ENCODE measurements at regions of chr20 and their contacts with region 1.

Region 1: GRCh38 chr20:32031007-32031958 is 20.8 kb upstream of the HCK start:
- DNase-seq: peak; percentile 68
- ATAC-seq: peak; percentile 91
- H3K4me3 Mint-ChIP-seq: no peak overlapping the region
- H3K27ac Mint-ChIP-seq: no peak overlapping the region
- H3K4me1 Mint-ChIP-seq: no peaks in the 10 kb centered on the region
- H3K27me3 Mint-ChIP-seq: peaks cover 16% of the 10 kb centered on the region
- CTCF ChIP-seq: peak; percentile 100

Region 2: DNA sequence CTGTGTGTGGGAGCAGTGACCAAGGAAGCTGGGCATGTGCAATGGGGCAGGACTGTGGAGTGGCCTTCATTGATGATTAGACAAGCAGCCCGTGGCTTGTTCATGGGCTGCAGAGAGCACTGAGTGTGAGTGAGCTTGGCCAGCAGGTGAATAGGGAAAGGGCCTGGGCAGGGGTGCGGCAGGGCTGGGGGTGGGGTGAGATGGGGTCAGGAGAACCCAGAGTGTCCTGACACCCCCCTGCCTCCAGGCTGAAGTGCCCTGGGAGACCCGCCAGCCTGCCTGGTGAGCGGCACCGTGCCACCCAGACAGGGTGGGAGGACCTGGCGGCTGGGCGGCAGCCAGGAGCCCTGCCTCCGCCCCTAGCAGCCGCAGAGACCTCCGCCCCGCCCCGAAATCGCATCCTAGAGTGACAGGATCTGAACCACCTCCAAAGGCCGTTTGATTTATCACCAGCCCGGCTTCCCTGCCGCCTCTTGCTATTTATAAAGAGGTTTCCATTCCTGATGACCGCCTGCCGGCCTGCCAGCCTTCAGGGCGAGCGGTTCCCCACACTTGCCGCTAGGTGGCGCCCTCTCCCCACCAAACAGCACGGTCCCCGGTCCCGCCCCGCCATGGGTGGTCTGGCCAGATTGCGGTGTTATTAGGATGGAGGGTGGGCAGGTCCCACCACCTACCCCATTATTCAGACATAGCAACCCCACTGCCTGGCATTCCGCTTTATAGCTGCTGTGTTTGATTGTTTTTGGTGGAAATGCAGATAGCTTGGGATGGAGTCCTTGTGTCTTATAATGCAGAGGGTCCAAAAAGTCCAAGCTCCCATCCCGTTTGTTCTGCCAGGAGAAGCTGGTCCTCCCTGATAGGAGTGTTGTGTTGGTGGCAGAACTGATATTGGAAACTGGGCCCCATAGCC is 208.6 kb before region 1 on chr20:
- CTCF ChIA-PET with region 1: interaction called, 34 read pairs
- POLR2A ChIA-PET with region 1: interaction called, 6 read pairs
- intact Hi-C with region 1: no loop called
- DNase-seq: peak; percentile 78
- ATAC-seq: peak; percentile 92
- H3K4me3 Mint-ChIP-seq: no peak overlapping the region
- H3K27ac Mint-ChIP-seq: no peak overlapping the region
- H3K4me1 Mint-ChIP-seq: peaks cover 2% of the 10 kb centered on the region
- H3K27me3 Mint-ChIP-seq: peaks cover 2% of the 10 kb centered on the region
- CTCF ChIP-seq: peak; percentile 99

Region 3: DNA sequence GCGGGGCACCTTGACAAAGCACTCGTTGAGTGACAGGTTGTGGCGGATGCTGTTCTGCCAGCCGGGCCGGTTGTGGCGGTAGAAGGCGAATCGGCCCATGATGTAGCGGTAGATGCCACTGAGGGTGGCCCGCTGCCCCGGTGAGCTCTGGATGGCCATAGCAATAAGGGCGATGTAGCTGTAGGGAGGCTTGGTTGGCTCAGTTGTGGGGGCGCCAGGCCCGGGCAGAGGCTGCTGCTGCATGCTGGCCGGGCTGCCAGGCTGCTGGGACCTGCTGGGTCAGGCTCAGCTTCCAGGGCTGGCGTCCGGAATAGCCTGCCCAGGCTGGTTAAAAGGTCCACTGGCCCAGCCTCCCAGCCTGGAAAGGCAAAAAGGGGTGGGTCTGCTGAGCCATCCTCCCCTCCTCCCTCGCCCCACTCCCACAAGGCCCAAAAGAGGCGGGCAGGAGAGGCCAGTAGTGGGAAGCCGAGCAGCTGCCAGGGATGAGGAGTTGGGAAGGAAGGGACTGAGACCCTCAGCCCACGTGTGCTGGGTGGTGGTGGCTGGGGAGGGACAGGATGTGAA is 185.9 kb before region 1 on chr20 and contains the start of gene FOXS1:
- CTCF ChIA-PET with region 1: interaction called, 27 read pairs
- POLR2A ChIA-PET with region 1: no interaction called
- intact Hi-C with region 1: loop called (anchors 5 kb)
- DNase-seq: no peak
- ATAC-seq: no peak
- H3K4me3 Mint-ChIP-seq: no peak within 1 kb of the TSS
- H3K27ac Mint-ChIP-seq: no peak within 1 kb of the TSS
- H3K4me1 Mint-ChIP-seq: no peaks in the 10 kb centered on the region
- H3K27me3 Mint-ChIP-seq: peaks cover 9% of the 10 kb centered on the region
- CTCF ChIP-seq: no peak
- total RNA-seq, gene FOXS1: not detected

Region 4: DNA sequence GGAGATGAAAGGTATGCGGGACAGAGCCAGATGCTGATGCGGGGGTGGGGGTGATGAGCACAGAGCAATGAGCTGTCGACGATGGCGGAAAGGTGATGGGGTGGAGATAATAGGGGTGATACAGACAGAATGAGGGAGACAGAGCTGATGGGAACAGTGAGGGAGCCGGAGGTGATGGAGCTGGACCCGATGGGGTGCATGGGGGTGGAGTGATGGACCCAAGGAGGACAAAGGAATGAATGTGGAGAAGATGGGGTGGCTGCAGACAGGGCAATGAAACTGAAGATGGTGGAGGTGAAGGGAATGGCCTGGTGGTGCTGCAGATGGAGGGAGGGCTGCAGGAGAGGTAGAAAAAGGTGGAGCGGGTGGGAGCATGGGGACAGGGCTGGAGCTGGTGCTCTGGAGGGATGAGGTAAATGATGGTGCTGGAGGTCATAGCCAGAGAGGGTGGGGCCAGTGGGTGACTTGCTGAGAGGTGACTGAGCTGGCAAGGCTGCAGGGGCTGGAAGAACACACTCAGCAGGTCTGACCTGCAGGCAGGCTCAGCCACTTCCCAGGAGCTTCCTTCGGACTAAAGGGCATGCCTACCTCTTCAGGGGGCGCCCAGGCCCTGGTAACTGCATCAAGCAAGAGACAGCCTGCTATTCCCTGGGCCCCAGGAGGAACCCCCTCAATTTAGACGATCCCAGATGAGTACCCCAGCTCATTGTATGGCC is 179.9 kb before region 1 on chr20:
- CTCF ChIA-PET with region 1: interaction called, 39 read pairs
- POLR2A ChIA-PET with region 1: no interaction called
- intact Hi-C with region 1: loop called (anchors 5 kb)
- DNase-seq: no peak
- ATAC-seq: no peak
- H3K4me3 Mint-ChIP-seq: no peak overlapping the region
- H3K27ac Mint-ChIP-seq: no peak overlapping the region
- H3K4me1 Mint-ChIP-seq: no peaks in the 10 kb centered on the region
- H3K27me3 Mint-ChIP-seq: peaks cover 19% of the 10 kb centered on the region
- CTCF ChIP-seq: no peak

Region 5: GRCh38 chr20:31989030-31989645 is 42.1 kb before region 1 on chr20:
- CTCF ChIA-PET with region 1: no interaction called
- POLR2A ChIA-PET with region 1: no interaction called
- intact Hi-C with region 1: no loop called
- DNase-seq: no peak
- ATAC-seq: no peak
- H3K4me3 Mint-ChIP-seq: no peak overlapping the region
- H3K27ac Mint-ChIP-seq: no peak overlapping the region
- H3K4me1 Mint-ChIP-seq: peaks cover 5% of the 10 kb centered on the region
- H3K27me3 Mint-ChIP-seq: peaks cover 12% of the 10 kb centered on the region
- CTCF ChIP-seq: no peak

Region 6: DNA sequence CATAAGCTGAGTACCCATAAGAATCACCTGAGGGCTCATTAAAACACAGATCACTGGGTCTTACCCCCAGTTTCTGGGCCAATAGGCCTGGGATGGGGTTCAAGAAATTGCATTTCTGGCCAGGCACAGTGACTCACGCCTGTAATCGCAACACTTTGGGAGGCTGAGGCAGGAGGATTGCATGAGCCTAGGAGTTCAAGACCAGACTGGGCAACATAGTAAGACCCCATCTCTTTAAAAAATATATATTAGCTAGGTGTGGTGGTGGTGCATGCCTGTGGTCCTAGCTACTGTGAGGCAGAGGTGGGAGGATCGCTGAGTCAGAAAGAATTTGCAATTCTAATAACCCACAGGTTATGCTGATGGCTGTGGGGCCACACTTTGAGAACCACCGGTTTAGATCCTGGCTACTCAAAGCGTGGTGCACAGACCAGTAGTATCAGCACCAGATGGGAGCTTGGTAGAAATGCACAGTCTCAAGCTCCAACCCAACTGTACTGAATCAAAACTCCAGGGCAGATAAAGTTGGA is 19.1 kb before region 1 on chr20:
- CTCF ChIA-PET with region 1: interaction called, 24 read pairs
- POLR2A ChIA-PET with region 1: no interaction called
- intact Hi-C with region 1: no loop called
- DNase-seq: no peak
- ATAC-seq: no peak
- H3K4me3 Mint-ChIP-seq: no peak overlapping the region
- H3K27ac Mint-ChIP-seq: no peak overlapping the region
- H3K4me1 Mint-ChIP-seq: no peaks in the 10 kb centered on the region
- H3K27me3 Mint-ChIP-seq: peaks cover 17% of the 10 kb centered on the region
- CTCF ChIP-seq: no peak

Region 7: DNA sequence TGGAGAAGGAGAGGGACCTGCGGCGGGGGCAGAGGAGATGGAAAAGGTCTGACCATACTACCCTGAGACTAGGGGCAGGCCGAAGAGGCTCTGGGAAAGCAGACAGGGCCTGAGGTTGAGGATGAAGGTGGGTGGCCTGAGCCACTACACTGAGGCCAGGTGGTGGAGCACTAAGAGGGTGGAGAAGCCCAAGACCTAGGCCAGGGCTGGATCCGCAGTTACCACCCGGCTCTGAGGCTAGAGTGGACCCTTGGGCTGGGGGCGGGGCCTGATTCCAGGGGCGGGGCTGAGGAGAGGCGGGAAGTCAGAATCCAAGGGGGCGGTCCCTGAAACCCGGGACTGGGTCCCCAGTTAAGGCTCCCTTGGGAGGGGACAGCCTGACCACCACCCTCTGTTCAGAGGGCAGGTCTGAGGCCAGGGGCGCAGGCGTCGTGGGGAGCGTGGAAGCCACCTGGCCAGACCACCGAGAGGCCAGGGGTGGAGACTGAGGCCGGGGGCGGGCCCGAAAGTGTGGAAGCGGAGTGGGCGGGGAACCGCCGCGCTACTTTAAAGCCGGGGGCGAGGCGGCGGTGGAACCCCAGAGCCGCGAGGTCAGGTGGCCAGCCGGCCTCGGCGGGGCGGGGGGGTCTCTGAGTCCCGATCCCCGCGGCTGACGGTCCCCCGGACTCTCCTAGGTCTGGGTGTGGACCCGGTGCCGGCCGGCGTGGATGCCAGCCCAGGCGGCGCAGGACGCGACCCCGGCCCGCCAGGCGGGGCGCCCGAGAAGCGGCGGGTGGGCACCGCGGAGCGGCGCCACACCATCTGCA is 12.8 kb before region 1 on chr20:
- CTCF ChIA-PET with region 1: interaction called, 35 read pairs
- POLR2A ChIA-PET with region 1: no interaction called
- intact Hi-C with region 1: no loop called
- DNase-seq: peak; percentile 60
- ATAC-seq: peak; percentile 71
- H3K4me3 Mint-ChIP-seq: peak overlapping the region; percentile 63
- H3K27ac Mint-ChIP-seq: no peak overlapping the region
- H3K4me1 Mint-ChIP-seq: peaks cover 18% of the 10 kb centered on the region
- H3K27me3 Mint-ChIP-seq: peaks cover 63% of the 10 kb centered on the region
- CTCF ChIP-seq: no peak

Region 8: GRCh38 chr20:32052090-32052777 is 21.0 kb after region 1 on chr20 and contains the start of gene HCK:
- CTCF ChIA-PET with region 1: interaction called, 13 read pairs
- POLR2A ChIA-PET with region 1: no interaction called
- intact Hi-C with region 1: no loop called
- DNase-seq: peak; percentile 12
- ATAC-seq: no peak
- H3K4me3 Mint-ChIP-seq: peak within 1 kb of the TSS; percentile 35
- H3K27ac Mint-ChIP-seq: no peak within 1 kb of the TSS
- H3K4me1 Mint-ChIP-seq: peaks cover 15% of the 10 kb centered on the region
- H3K27me3 Mint-ChIP-seq: peaks cover 45% of the 10 kb centered on the region
- CTCF ChIP-seq: no peak
- total RNA-seq, gene HCK: not detected

Region 9: DNA sequence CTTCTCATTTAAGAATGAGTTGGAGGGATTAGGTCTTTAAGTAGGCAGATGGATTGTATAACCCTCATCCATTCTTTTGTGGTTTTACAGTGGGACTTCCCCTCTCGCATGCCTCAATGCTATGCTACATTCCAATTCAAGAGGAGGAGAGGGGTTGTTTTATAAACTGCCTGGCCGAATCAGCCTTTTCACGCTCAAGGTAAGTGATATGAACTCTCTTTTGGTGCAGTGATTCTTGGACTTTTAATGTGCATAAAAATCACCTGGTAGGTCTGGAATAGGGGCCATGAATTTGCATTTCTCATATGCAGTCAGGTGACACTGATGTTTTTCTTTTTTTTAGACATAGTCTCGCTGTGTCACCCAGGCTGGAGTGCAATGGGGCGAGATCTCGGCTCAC is 337.6 kb after region 1 on chr20:
- CTCF ChIA-PET with region 1: no interaction called
- POLR2A ChIA-PET with region 1: no interaction called
- intact Hi-C with region 1: no loop called
- DNase-seq: no peak
- ATAC-seq: peak; percentile 35
- H3K4me3 Mint-ChIP-seq: no peak overlapping the region
- H3K27ac Mint-ChIP-seq: peak overlapping the region; percentile 70
- H3K4me1 Mint-ChIP-seq: peaks cover 45% of the 10 kb centered on the region
- H3K27me3 Mint-ChIP-seq: no peaks in the 10 kb centered on the region
- CTCF ChIP-seq: no peak